Left ventricle myocardium inferior (tissue), 1 donor: ENCODE measurements at regions of chr1 and their contacts with region 1.

Region 1: DNA sequence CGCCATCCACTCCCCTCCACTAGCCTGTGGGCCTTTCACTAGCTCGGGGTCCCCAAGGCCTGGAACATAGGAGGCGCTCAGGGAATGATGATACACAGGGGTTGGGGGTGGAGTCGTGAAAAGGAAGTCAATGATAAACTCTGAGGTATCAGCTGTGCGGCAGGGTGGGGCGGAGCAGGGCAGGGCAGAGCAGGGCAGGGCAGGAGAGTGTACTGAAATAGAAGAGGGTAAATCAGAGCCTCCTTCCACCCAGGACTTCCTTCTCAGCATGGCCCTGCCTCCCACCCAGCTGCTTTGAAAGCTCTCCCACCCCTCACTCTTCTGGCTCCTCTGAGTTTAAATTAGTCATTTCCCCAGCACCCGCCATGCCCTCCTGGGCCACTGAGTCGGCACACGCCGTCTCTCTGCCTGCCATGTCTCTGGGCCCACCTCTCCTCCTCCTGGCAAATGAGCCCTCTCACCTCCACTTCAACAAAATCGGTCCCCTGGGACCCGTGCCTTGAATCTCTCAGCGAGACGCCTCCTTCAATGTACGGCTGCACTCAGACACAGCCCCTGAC is 16.9 kb downstream of the CAPZB start:
- DNase-seq: no peak
- H3K4me3 ChIP-seq: peak overlapping the region; percentile 17
- H3K27ac ChIP-seq: peak overlapping the region; percentile 71
- H3K4me1 ChIP-seq: peaks cover 94% of the 10 kb centered on the region
- H3K27me3 ChIP-seq: no peaks in the 10 kb centered on the region
- CTCF ChIP-seq: no peak

Region 2: GRCh38 chr1:19390901-19391595 is 77.4 kb before region 1 on chr1:
- intact Hi-C with region 1: loop called (anchors 10 kb)
- DNase-seq: peak; percentile 49
- H3K4me3 ChIP-seq: peak overlapping the region; percentile 18
- H3K27ac ChIP-seq: peak overlapping the region; percentile 76
- H3K4me1 ChIP-seq: peaks cover 78% of the 10 kb centered on the region
- H3K27me3 ChIP-seq: no peaks in the 10 kb centered on the region
- CTCF ChIP-seq: peak; percentile 85

Region 3: DNA sequence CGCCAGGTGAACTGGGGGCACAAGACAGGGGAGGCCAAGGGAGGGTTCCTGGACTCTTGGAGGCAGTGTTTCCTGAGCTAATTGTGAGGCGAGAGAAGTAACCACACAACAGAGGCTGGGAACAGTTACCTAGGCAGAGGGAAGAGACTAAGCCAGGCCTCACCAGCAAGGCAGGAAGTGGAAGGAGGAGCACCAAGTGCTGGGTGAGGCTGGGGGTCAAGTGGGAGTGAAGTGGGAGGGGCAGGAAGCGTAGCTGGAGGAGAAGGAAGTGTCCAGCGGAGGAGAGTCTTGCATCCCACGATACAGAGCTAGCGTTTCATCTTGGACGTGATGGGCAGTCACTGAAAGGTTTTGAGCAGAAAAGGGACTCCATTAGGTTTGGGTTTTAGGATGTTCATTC is 65.1 kb after region 1 on chr1:
- intact Hi-C with region 1: no loop called
- DNase-seq: peak; percentile 42
- H3K4me3 ChIP-seq: peak overlapping the region; percentile 35
- H3K27ac ChIP-seq: peak overlapping the region; percentile 63
- H3K4me1 ChIP-seq: peaks cover 22% of the 10 kb centered on the region
- H3K27me3 ChIP-seq: no peaks in the 10 kb centered on the region
- CTCF ChIP-seq: no peak